Cardiac septum (tissue), 1 donor: ENCODE measurements at regions of chr6 and their contacts with region 1.

Region 1: DNA sequence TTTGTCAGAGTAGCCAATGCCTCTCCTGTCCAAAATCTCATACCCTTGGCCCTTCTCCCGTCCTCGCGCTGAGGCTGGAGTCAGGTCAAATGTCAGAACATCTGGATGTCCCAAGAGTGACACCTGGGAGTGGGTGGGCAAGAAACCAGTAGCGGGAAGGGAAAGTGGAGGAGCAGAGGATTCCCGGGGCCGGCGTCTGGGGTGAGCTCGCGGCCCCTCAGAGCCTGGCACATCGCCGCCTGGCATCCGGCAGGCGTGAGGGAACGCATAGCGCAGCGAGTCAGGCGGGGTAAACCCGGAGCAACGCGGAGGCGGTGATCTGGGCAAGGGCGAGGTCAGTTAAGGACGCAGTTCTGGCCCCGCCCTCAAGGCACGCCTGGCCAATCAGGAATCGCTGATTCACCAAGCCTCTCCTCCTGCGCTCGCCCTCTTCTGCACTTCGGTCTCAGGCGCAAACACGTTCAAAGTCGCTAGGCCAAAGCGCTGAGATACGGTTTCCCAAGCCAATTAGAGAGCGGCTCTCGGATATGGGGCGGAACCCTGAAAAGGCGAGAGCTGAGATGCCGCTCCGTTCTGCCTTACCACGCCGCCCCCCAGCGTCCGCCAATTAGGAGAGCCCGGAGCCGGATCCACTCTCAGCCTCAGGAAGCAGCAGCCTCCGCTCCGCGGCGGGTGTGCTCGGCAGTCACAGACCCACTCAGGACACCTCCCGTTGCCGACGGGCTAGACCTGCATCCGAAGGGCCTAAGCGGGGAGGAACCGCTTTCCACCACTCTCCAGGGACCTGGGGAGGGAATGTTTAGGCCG is 22.5 kb downstream of the VPS52 start:
- DNase-seq: peak; percentile 99

Region 2: GRCh38 chr6:33014841-33015634 is 234.1 kb before region 1 on chr6:
- intact Hi-C with region 1: loop called (anchors 5 kb)
- DNase-seq: no peak

Region 3: GRCh38 chr6:33118525-33119123 is 130.5 kb before region 1 on chr6:
- intact Hi-C with region 1: loop called (anchors 2 kb)
- DNase-seq: no peak

Region 4: DNA sequence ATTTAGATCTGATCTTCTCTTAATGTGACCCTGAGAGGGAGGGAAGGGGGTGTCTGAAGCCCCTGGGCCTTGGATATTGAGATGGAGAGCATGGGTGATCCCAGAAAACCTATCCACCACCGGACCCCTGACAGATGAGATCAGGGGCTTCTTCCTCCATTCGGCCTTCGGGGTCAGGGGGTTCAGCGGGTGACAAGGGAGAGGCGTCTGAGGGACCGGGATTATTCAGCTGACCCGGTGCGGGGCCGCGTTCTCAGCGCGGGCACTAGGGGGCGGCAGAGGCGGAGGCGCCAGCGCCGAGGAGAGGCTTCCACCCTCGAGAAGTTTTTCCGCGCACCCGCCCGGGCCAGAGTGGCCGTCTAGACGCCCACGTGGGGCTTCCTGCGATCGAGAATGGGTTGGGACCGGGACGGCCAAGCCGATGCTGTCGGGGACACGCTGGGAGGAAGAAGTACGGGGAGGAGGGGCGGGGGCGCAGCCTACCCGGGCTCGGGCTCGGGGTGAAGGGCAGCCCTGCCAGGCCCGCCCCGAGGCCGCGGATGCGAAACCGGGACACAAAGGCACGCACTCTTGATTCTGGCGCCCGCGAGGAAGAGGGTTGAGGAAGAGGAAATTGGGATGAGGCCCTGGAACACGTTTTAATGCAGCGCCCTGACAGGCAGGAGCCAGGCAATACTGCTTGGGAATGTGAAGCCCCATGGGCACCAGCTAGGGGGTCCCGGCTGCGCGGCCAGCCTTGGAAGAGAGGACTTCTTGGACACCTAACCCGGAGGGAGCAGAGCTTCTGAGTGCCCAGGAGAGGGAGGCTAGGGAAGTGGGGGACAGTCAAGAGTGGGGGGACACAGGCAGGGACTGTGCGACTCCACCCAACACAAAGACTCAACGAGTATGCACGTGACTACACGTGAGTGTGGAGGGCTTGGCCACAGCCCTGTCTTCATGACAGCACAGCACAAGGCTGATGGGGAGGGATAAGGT is 87.5 kb before region 1 on chr6:
- intact Hi-C with region 1: loop called (anchors 1 kb)
- DNase-seq: peak; percentile 93

Region 5: DNA sequence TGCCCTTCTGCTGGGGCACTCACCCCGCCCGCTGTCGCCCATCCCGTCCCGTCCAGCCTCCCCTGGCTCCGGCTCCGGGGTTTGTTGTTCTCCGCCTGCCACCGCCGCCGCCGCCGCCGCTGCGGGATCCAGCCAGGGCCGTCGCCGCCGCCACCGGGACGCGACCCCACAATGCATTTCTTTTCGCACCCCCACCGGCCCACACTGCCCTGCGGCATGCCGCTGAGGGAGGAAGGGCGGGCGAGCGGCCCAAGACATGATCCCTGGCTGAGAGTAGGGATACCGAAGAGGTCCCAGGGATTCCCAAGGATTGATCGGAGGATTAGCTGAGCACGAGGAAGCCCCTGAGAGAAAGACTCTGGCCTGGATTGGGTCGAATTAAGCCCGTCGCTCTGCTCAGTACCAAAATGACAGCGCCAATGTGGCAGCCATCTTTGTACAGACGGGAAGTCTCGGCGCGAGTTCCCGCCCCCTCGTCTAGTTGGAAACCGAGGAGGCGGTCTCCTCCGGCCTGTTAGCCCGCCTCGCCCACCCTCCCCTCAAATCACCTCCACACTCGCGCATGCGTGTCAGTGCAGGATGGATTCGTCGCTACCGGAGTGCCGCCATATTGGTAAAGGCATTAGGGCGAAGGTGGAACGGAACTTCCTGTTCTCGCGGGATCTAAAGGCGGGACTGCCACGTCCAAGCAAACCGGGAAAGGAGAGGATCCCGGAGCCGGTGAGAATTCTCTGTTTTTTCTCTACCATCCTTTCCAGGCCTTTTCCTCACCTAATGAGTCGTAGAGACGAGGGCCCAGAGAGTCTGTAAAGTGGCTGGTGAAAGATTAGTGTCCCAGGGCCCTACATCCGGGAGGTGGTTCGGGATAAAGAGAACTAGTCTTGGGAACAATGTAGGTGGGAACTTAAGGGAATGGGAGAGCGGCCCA is 48.6 kb before region 1 on chr6 and contains the starts of genes RXRB and SLC39A7:
- intact Hi-C with region 1: loop called (anchors 5 kb)
- DNase-seq: peak; percentile 99
- total RNA-seq, gene RXRB: 33.5 TPM
- total RNA-seq, gene SLC39A7: 62.4 TPM

Region 6: DNA sequence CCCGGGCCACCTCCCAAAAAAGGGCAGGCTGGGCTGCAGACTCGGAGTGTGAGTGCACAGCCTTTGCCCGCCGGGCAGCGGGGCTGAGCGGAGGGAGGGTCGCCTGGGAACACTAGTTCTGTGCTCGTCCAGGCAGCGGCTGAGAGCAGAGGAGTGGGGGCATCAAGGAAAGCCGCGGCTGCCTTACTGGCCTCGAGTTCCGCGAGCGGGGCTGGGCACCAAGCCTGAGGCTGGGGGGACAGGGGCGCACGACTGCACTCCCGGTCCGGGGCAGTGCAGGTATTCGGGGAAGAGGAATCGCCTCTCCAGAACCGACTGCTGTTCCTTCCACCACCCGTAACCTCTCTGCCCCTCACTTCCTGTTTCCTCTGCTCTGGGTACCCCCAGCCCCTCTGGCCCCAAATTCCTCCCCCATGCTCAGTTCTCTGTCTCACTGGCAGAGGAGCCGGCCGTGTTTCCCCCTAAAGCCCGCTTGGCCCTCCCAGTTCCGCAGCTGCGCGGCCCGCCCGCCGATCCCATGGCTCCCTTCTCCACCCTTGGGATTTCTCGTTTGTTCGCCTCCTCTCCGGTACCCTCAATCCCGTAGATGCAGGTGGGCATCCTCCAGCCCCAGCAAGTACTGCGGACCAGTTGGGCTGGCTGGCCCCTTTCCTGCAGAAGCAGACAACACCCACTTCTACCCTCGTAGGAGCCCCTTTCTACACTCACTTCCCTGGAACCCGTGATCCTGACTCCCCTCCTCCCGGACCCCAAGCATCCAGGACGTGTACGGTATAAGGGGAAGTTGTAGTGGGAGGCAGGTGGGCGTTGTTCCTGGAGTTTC is 35.8 kb before region 1 on chr6:
- intact Hi-C with region 1: loop called (anchors 2 kb)
- DNase-seq: peak; percentile 74

Region 7: DNA sequence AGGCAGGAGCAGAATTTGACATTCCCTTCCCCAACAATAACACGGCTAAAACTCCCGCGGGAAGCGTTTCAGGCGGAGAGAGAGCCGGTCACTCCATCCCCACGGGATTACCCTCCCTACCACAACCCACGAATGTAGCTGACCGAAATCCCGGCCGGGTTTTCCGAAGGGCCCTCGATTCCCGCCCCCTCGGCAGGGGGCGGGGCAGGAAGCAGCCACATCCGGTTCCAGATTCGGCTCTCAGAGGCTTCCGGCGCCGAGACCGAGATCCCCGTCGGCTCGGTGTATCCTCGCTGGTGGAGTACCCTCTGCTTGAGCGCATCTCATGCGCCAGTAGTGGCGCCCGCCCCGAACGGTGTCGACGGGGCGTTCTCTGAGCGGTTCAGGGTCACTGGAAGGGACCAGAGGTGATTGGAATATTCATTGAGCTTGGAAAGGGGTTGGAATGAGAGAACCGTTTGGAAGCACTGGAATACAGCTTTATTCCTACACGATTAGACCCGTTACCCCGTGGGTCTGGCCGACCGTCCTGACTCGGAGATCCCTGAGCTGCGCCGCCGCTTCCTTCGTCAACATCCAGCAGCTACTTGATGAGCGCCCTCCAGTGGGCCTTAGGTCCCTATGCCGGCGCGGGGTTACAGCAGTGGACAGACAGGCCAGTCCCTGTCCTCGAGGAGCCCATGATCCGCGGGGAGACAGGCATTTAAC is 50.3 kb after region 1 on chr6:
- intact Hi-C with region 1: loop called (anchors 2 kb)
- DNase-seq: peak; percentile 96